Activated naive CD4-positive, alpha-beta T cell treated with anti-CD3 and anti-CD28 coated beads for 36 hours (primary cell): ENCODE measurements at regions of chr9 and their contacts with region 1.

Region 1: GRCh38 chr9:132406554-132407122 is at the start of gene TTF1:
- DNase-seq: peak; percentile 96
- H3K4me3 Mint-ChIP-seq: peak within 1 kb of the TSS; percentile 95
- H3K27ac Mint-ChIP-seq: peak within 1 kb of the TSS; percentile 90
- H3K4me1 Mint-ChIP-seq: peaks cover 53% of the 10 kb centered on the region
- H3K27me3 Mint-ChIP-seq: peaks cover 10% of the 10 kb centered on the region
- total RNA-seq, gene TTF1: 27.1 to 29.9 TPM

Region 2: DNA sequence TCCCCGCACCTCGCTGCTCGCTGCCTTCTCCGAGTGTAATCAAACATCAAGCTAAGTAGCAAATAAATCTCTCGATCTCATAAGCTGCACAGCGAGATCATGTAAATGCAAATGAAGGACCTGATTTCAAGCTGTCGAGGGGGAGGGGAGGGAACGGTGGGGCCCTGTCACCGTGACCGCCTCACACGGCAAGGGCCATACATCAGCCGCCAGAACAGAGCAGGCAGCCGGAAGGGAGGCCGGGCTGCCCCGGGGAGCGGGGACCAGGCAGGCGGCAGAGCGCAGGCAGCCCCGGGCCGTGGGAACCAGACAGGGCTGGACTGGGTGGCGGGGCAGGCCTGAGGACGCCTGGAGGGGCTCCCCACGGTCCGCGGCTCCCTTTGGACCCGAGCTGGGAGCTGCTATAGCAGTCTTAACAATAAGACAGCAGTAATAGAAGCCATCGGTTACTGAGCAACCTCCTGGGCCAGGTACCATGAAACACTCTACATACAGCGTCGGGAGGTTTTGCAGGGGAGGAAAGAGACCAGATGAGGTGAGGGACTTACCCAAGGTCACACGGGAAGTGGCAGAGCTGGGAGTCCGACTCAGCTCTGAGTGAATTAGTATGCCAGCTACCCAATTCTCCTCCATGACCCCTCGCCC is 80.2 kb after region 1 on chr9:
- CTCF ChIA-PET with region 1: interaction called, 9 read pairs
- intact Hi-C with region 1: loop called (anchors 2 kb)
- DNase-seq: peak; percentile 71
- H3K4me3 Mint-ChIP-seq: peak overlapping the region; percentile 39
- H3K27ac Mint-ChIP-seq: peak overlapping the region; percentile 65
- H3K4me1 Mint-ChIP-seq: peaks cover 22% of the 10 kb centered on the region
- H3K27me3 Mint-ChIP-seq: peaks cover 48% of the 10 kb centered on the region

Region 3: GRCh38 chr9:132582276-132582785 is 175.7 kb after region 1 on chr9 and contains the start of gene BARHL1:
- CTCF ChIA-PET with region 1: interaction called, 8 read pairs
- intact Hi-C with region 1: loop called (anchors 2 kb)
- DNase-seq: no peak
- H3K4me3 Mint-ChIP-seq: peak within 1 kb of the TSS; percentile 62
- H3K27ac Mint-ChIP-seq: no peak within 1 kb of the TSS
- H3K4me1 Mint-ChIP-seq: peaks cover 12% of the 10 kb centered on the region
- H3K27me3 Mint-ChIP-seq: peaks cover 72% of the 10 kb centered on the region
- total RNA-seq, gene BARHL1: not detected

Region 4: DNA sequence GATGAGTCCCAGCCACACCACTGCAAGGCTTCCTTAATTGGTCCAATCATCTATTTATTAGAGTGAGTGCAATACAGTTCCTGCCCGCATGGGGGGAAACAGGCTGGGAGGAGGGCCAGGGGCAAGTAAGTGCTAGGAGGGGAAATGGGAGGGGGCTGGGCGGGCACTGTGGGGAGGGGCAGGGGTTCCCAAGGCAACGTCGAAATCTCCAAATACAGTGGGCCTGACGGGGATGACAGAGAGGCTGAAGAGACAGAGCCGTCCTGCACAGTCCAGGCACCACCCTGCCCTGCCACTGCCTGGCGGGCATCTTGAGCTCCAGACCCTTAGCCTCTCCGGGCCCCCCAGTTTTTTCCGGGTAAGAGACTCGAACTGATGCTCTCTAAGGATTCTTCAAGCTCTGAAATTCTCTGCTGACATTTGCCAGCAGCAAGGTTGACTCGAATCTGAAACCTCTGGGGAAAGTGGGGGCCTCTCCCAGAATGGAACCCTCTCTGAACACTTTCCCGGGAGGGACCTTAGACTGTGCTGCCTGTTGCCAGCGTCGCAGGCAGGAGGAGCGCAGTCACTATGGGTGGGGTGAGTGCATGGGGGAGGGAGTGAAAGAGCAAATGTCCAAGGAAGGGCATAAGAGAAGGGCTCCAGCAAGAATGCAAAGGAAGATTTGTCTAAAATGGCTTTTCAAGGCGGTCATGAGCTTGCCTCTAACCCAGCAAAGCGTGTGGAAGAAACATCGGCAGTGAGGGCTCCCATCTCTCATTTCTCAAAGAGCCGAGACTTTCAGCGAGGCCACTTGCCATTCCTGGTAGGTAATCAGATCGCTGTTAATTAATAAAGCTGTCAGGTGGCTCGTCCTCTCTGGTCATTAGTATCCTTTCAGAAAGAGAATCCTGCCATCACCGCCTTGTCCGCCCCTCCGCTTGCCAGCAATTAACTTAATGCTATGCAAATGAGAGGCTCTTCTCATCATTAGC is 362.6 kb after region 1 on chr9:
- CTCF ChIA-PET with region 1: no interaction called
- intact Hi-C with region 1: loop called (anchors 10 kb)
- DNase-seq: peak; percentile 80
- H3K4me3 Mint-ChIP-seq: peak overlapping the region; percentile 88
- H3K27ac Mint-ChIP-seq: peak overlapping the region; percentile 89
- H3K4me1 Mint-ChIP-seq: peaks cover 13% of the 10 kb centered on the region
- H3K27me3 Mint-ChIP-seq: no peaks in the 10 kb centered on the region